ENCODE measurements at regions of chr15 and their contacts with region 1.

Region 1: GRCh38 chr15:90352109-90352893 is at the start of gene ZNF774:
- DNase-seq: peak; percentile 78
- ATAC-seq: peak; percentile 98
- H3K4me3 Mint-ChIP-seq: peak within 1 kb of the TSS; percentile 87
- H3K27ac Mint-ChIP-seq: peak within 1 kb of the TSS; percentile 82
- H3K4me1 Mint-ChIP-seq: peaks cover 11% of the 10 kb centered on the region
- H3K27me3 Mint-ChIP-seq: no peaks in the 10 kb centered on the region
- CTCF ChIP-seq: no peak
- total RNA-seq, gene ZNF774: 1.3 and 2.9 TPM in 2 replicates

Region 2: GRCh38 chr15:90126457-90127435 is 225.6 kb before region 1 on chr15:
- CTCF ChIA-PET with region 1: no interaction called
- POLR2A ChIA-PET with region 1: no interaction called
- intact Hi-C with region 1: no loop called
- DNase-seq: no peak
- ATAC-seq: no peak
- H3K4me3 Mint-ChIP-seq: no peak overlapping the region
- H3K27ac Mint-ChIP-seq: no peak overlapping the region
- H3K4me1 Mint-ChIP-seq: peaks cover 8% of the 10 kb centered on the region
- H3K27me3 Mint-ChIP-seq: peaks cover 8% of the 10 kb centered on the region
- CTCF ChIP-seq: no peak

Region 3: DNA sequence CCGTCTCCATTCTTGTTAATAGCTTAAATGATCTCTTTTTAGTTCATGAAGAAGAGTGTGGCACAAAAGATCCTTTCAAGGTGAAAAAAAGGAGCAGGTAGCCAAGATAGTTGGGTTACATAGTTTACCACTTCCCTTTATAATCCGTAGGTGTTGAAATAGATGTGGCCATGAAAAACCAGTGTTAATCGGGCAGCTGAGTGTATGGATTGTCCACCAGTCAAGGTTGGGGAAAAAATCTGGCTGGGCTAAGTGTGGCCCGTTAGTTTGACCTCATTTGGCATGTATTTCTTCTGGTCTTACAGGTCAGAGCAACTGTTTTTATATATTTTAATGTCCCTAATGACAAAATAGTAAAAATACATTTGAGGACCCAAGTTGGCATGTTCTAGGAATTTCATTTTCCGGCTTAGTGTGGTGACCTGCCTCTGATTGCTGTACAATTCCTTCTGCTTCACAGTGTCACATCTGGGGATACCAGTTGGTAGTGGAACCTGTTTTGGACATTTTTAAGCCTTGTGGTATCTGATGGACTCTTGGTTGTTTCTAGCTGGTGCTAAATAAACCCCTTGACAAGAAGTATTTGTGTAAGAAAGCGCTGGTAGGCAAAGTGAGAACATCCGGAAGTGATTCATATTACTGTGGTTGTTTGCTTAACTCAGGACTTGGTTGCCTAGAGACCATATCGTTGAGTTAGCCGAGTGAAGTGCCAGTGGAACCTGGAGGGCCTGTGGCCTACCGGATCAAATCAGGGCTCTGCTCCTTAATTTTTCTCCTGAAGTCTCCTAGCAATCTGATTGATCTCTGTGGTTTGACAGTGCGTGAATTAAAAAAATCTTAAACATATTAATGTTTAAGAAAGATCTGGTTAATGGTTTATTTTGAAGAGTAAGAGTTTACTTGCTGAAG is 48.4 kb after region 1 on chr15:
- CTCF ChIA-PET with region 1: no interaction called
- POLR2A ChIA-PET with region 1: no interaction called
- intact Hi-C with region 1: loop called (anchors 1 kb)
- DNase-seq: no peak
- ATAC-seq: peak; percentile 93
- H3K4me3 Mint-ChIP-seq: peak overlapping the region; percentile 73
- H3K27ac Mint-ChIP-seq: peak overlapping the region; percentile 96
- H3K4me1 Mint-ChIP-seq: peaks cover 63% of the 10 kb centered on the region
- H3K27me3 Mint-ChIP-seq: no peaks in the 10 kb centered on the region
- CTCF ChIP-seq: no peak